Left ventricle myocardium inferior (tissue), 1 donor: ENCODE measurements at regions of chr20 and their contacts with region 1.

Region 1: GRCh38 chr20:4014031-4014474 is 1.3 kb downstream of the RNF24 start:
- DNase-seq: no peak
- H3K4me3 ChIP-seq: peak overlapping the region; percentile 91
- H3K27ac ChIP-seq: no peak overlapping the region
- H3K4me1 ChIP-seq: peaks cover 25% of the 10 kb centered on the region
- H3K27me3 ChIP-seq: no peaks in the 10 kb centered on the region
- CTCF ChIP-seq: peak; percentile 68

Region 2: DNA sequence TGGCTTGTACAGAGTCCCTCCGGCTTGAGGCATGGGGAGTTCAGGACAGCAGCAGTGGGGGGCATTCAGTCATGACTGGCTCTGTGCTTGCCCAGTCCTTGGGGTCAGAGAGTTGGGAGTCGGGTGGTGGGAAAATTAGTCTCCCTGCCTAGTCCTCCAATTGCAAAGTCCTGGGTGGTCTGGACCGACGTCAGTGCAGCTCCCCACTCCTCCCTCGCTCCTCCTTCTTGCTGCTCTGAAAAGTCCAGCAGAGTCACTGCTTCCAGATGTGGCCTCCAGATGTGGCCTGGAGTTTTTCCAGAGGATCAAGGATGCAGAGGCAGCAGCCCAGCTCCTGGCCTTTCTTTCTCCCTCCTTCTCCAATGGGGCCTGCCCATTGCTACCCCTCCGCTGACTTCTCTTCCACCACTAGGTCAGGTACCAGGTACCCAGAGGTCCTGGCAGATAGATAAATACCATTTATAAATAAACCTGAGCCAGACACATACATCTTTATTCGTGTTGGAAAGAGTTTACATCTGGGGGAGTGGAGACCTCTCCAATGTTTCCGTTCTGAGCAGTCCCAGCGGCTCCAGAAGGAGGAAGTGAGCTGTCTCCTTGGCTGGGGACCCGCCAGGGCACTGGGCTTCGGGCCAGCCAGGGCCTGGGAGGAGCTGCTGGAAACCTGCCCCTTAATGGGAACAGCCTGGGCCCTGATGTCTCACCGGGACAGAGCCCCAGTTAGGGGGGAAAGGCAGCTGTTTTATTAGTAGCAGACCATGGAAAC is 50.3 kb after region 1 on chr20:
- intact Hi-C with region 1: loop called (anchors 10 kb)
- DNase-seq: peak; percentile 94
- H3K4me3 ChIP-seq: peak overlapping the region; percentile 15
- H3K27ac ChIP-seq: peak overlapping the region; percentile 91
- H3K4me1 ChIP-seq: peaks cover 66% of the 10 kb centered on the region
- H3K27me3 ChIP-seq: no peaks in the 10 kb centered on the region
- CTCF ChIP-seq: no peak